ENCODE measurements at regions of chr2 and their contacts with region 1.

Region 1: GRCh38 chr2:43293744-43294695 is 67.6 kb upstream of the ZFP36L2 start:
- DNase-seq: no peak
- ATAC-seq: peak; percentile 94
- H3K4me3 Mint-ChIP-seq: no peak overlapping the region
- H3K27ac Mint-ChIP-seq: peak overlapping the region; percentile 92
- H3K4me1 Mint-ChIP-seq: peaks cover 18% of the 10 kb centered on the region
- H3K27me3 Mint-ChIP-seq: no peaks in the 10 kb centered on the region
- CTCF ChIP-seq: no peak

Region 2: DNA sequence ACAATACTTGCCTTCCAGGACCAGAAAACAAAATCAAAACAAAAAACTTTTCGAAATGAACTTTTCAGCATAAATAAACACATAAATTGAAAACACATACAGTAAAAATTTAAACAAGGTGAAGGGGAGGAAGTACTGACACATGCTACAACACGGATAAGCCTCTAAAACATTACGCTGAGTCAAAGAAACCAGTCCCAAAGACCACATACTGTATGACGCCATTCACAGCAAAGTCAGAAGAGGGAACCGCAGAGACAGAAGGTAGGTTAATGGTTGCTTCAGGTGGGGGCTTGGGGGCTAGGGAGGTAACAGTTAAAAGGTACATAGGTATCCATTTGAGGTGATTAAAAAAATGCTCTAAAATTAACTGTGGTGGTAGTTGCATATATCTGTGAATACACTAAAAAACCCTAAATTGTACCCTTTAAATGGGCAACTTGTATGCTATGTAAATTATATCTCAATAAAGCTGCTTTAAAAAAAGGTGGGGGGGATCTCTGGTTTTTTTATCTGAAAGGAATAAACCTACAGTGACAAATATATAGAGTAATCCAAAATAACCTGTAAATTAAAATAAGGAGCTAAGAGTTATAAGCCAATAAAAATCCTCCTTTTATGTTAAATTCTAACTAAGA is 940.1 kb before region 1 on chr2:
- CTCF ChIA-PET with region 1: no interaction called
- POLR2A ChIA-PET with region 1: no interaction called
- intact Hi-C with region 1: no loop called
- DNase-seq: no peak
- ATAC-seq: no peak
- H3K4me3 Mint-ChIP-seq: no peak overlapping the region
- H3K27ac Mint-ChIP-seq: no peak overlapping the region
- H3K4me1 Mint-ChIP-seq: peaks cover 33% of the 10 kb centered on the region
- H3K27me3 Mint-ChIP-seq: no peaks in the 10 kb centered on the region
- CTCF ChIP-seq: no peak

Region 3: DNA sequence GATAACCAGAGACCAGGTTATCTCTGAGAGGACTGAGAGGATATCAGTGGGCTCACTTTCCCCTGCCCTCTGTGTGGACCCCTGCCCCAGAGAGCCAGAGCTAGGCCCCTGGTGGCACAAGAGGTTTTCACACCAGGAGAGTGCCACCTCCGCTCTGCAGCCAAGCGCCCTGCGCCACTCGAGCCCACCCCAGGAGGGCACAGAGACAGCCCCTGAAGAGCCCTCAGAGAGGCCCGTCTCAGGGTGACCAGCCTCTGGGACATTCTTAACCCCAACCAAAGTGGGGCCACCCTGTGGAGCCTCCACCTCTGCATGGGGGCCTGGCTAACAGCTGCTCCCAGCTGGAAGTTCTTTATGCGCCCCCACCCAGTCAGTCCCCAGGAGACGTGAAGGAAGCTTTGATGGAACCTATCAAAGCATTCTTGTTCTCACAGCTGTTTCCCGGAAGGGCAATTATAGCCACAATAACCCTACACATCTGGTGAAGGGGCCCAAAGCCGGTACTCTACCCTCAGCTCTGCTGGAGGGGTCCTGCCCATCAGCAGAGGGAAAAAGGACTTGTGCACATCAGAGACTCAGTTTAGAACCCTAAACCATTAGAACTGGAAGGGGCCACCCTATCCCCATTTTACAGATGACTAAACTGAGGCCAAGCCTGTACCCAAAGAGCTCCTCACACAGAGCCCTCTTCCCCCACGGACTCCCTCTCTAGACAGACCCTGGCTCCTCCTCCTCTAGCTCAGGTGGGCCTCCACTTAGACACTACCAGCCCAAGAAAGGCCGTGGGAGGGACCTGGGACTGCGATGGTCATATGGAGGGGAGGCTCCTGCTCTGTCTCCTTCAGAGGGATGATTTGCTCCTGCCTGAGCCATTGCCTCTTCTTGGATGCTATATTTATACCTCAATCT is 168.7 kb before region 1 on chr2:
- CTCF ChIA-PET with region 1: no interaction called
- POLR2A ChIA-PET with region 1: interaction called, 10 read pairs
- intact Hi-C with region 1: loop called (anchors 5 kb)
- DNase-seq: no peak
- ATAC-seq: no peak
- H3K4me3 Mint-ChIP-seq: no peak overlapping the region
- H3K27ac Mint-ChIP-seq: no peak overlapping the region
- H3K4me1 Mint-ChIP-seq: peaks cover 66% of the 10 kb centered on the region
- H3K27me3 Mint-ChIP-seq: no peaks in the 10 kb centered on the region
- CTCF ChIP-seq: no peak

Region 4: GRCh38 chr2:43408407-43409160 is 114.6 kb after region 1 on chr2:
- CTCF ChIA-PET with region 1: no interaction called
- POLR2A ChIA-PET with region 1: no interaction called
- intact Hi-C with region 1: loop called (anchors 10 kb)
- DNase-seq: no peak
- ATAC-seq: peak; percentile 97
- H3K4me3 Mint-ChIP-seq: peak overlapping the region; percentile 59
- H3K27ac Mint-ChIP-seq: peak overlapping the region; percentile 81
- H3K4me1 Mint-ChIP-seq: peaks cover 29% of the 10 kb centered on the region
- H3K27me3 Mint-ChIP-seq: no peaks in the 10 kb centered on the region
- CTCF ChIP-seq: no peak

Region 5: GRCh38 chr2:43426305-43427031 is 132.4 kb after region 1 on chr2:
- CTCF ChIA-PET with region 1: no interaction called
- POLR2A ChIA-PET with region 1: no interaction called
- intact Hi-C with region 1: loop called (anchors 1 kb)
- DNase-seq: no peak
- ATAC-seq: peak; percentile 98
- H3K4me3 Mint-ChIP-seq: peak overlapping the region; percentile 61
- H3K27ac Mint-ChIP-seq: peak overlapping the region; percentile 70
- H3K4me1 Mint-ChIP-seq: peaks cover 37% of the 10 kb centered on the region
- H3K27me3 Mint-ChIP-seq: no peaks in the 10 kb centered on the region
- CTCF ChIP-seq: no peak

Measured in activated B cell treated with CpG ODN at 0.5 μM for 24 hours (primary cell).